HepG2 (cell line): ENCODE measurements at regions of chr12 and their contacts with region 1.

Region 1: DNA sequence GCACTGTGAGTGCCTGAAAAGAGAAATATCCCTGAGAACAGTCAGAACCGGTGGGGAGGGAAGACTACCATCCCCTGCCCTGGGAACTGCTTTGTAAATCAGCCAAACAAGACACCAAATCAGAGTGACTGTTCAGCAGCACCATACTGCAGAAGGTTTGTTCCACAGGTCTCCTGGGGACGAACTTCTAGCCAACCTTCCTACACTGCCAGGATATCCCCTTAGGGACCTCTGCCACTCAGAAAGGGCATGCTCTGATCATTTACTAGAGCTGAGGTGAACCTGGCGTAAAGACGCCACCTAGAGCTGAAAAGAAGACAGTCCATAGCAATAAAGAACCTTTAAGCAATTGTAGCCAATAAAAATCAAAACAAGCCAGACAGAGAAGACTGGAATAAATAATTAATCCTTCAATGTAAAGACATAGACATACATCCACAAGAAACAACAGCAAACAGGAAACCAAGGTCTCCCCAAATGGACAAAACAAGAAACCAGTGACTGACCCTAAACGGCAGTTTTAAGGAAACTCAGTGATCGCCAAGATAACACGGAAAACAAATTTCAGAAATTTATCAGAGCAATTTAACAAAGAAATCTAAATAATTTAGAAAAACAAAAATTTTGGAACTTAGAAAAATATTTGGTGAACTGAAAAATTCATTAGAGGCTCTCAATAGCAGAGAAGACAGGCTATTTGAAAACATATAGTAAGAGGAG is 228.1 kb upstream of the AMIGO2 start:
- DNase-seq: peak; percentile 43
- ATAC-seq: peak; percentile 95
- H3K4me3 ChIP-seq: no peak overlapping the region
- H3K27ac ChIP-seq: no peak overlapping the region
- H3K4me1 ChIP-seq: peaks cover 6% of the 10 kb centered on the region; the same call in 1 of the 2 replicates
- H3K27me3 ChIP-seq: no peaks in the 10 kb centered on the region; a peak in 2 of 5 replicates
- CTCF ChIP-seq: peak; percentile 75
- EP300 ChIP-seq: no peak
- POLR2A ChIP-seq: no peak
- RAD21 ChIP-seq: peak; percentile 66

Region 2: GRCh38 chr12:46318037-46318436 is 989.8 kb before region 1 on chr12:
- CTCF ChIA-PET with region 1: no interaction called
- POLR2A ChIA-PET with region 1: no interaction called
- in situ Hi-C with region 1: no loop called
- intact Hi-C with region 1: loop called (anchors 5 kb)
- DNase-seq: no peak
- ATAC-seq: no peak
- H3K4me3 ChIP-seq: no peak overlapping the region
- H3K27ac ChIP-seq: no peak overlapping the region
- H3K4me1 ChIP-seq: no peaks in the 10 kb centered on the region
- H3K27me3 ChIP-seq: peaks cover 0 to 3% of the 10 kb centered on the region in 2 experiments; a peak in 1 of 5 replicates
- CTCF ChIP-seq: no peak
- EP300 ChIP-seq: no peak
- POLR2A ChIP-seq: no peak
- RAD21 ChIP-seq: no peak

Region 3: DNA sequence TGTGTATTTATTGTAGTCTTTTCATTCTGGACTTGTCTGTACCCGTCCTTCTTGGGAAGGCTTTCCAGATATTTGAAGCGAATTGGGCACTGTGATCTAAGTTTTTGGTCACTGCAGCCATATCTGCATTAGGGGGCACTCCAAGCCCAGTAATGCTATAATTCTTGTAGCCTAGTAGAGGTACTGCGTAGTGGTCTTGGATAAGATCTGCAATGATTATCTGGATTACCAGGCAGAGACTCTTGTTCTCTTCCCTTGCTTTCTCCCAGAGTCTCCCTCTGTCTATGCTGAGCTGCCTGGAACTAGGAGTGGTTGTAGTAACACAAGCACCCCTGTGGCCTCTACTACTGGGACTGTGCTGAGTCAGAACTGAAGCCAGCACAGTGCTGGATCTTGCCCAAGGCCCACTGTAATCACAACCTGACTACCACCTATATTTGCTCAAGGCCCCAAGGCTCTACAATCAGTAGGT is 965.2 kb before region 1 on chr12:
- CTCF ChIA-PET with region 1: no interaction called
- POLR2A ChIA-PET with region 1: no interaction called
- in situ Hi-C with region 1: loop called (anchors 25 kb)
- intact Hi-C with region 1: no loop called
- DNase-seq: peak; percentile 64
- ATAC-seq: peak; percentile 99
- H3K4me3 ChIP-seq: peak overlapping the region in 1 of 3 experiments; percentile 27; a peak in 2 of 6 replicates
- H3K27ac ChIP-seq: no peak overlapping the region
- H3K4me1 ChIP-seq: peaks cover 14% of the 10 kb centered on the region
- H3K27me3 ChIP-seq: no peaks in the 10 kb centered on the region
- CTCF ChIP-seq: peak; percentile 89
- EP300 ChIP-seq: no peak
- POLR2A ChIP-seq: no peak
- RAD21 ChIP-seq: peak; percentile 87

Region 4: GRCh38 chr12:47032644-47033043 is 275.2 kb before region 1 on chr12:
- CTCF ChIA-PET with region 1: interaction called, 29 read pairs
- POLR2A ChIA-PET with region 1: no interaction called
- in situ Hi-C with region 1: loop called (anchors 5 kb)
- intact Hi-C with region 1: loop called (anchors 1 kb)
- DNase-seq: peak; percentile 23
- ATAC-seq: peak; percentile 46; the same call in 1 of the 3 replicates
- H3K4me3 ChIP-seq: no peak overlapping the region
- H3K27ac ChIP-seq: no peak overlapping the region
- H3K4me1 ChIP-seq: no peaks in the 10 kb centered on the region
- H3K27me3 ChIP-seq: peaks cover 0 to 5% of the 10 kb centered on the region in 2 experiments; a peak in 2 of 5 replicates
- CTCF ChIP-seq: peak; percentile 60
- EP300 ChIP-seq: no peak
- POLR2A ChIP-seq: no peak
- RAD21 ChIP-seq: 0 out of 2 replicates have a peak, but pooled peaks have one; percentile 39

Region 5: GRCh38 chr12:47038270-47038748 is 269.5 kb before region 1 on chr12:
- CTCF ChIA-PET with region 1: interaction called, 29 read pairs
- POLR2A ChIA-PET with region 1: no interaction called
- in situ Hi-C with region 1: loop called (anchors 5 kb)
- intact Hi-C with region 1: no loop called
- DNase-seq: no peak
- ATAC-seq: no peak
- H3K4me3 ChIP-seq: no peak overlapping the region
- H3K27ac ChIP-seq: no peak overlapping the region
- H3K4me1 ChIP-seq: no peaks in the 10 kb centered on the region
- H3K27me3 ChIP-seq: no peaks in the 10 kb centered on the region; a peak in 2 of 5 replicates
- CTCF ChIP-seq: no peak
- EP300 ChIP-seq: no peak
- POLR2A ChIP-seq: no peak
- RAD21 ChIP-seq: no peak

Region 6: GRCh38 chr12:47073951-47074350 is 233.9 kb before region 1 on chr12:
- CTCF ChIA-PET with region 1: no interaction called
- POLR2A ChIA-PET with region 1: no interaction called
- in situ Hi-C with region 1: no loop called
- intact Hi-C with region 1: loop called (anchors 2 kb)
- DNase-seq: no peak
- ATAC-seq: no peak
- H3K4me3 ChIP-seq: no peak overlapping the region
- H3K27ac ChIP-seq: no peak overlapping the region
- H3K4me1 ChIP-seq: 0 out of 2 replicates have a peak, but pooled peaks cover 1% of the 10 kb centered on the region
- H3K27me3 ChIP-seq: peaks cover 1 to 19% of the 10 kb centered on the region in 2 experiments; a peak in 4 of 5 replicates
- CTCF ChIP-seq: no peak
- EP300 ChIP-seq: no peak
- POLR2A ChIP-seq: no peak
- RAD21 ChIP-seq: no peak

Region 7: DNA sequence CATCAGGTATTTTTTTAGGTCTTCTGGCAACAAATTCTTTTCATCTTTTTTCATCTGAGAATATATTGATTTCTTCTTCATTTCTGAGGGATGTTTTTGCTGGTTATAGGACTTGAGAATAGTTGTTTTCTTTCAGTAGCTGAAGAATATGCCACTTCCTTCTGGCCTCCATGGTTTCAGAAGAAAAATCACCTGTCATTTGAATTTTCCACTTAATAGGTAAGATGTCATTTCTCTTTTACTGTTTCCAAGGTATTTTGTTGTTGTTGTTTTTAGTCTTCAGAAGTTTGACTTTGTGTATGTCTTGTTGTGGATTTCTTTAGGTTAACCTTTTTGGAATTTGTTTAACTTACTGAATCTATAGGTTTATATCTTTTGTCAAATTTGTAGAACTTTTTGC is 29.7 kb after region 1 on chr12:
- CTCF ChIA-PET with region 1: no interaction called
- POLR2A ChIA-PET with region 1: no interaction called
- in situ Hi-C with region 1: no loop called
- intact Hi-C with region 1: no loop called
- DNase-seq: no peak
- ATAC-seq: no peak
- H3K4me3 ChIP-seq: no peak overlapping the region
- H3K27ac ChIP-seq: no peak overlapping the region
- H3K4me1 ChIP-seq: no peaks in the 10 kb centered on the region
- H3K27me3 ChIP-seq: no peaks in the 10 kb centered on the region
- CTCF ChIP-seq: no peak
- EP300 ChIP-seq: no peak
- POLR2A ChIP-seq: no peak
- RAD21 ChIP-seq: no peak